CD8-positive, alpha-beta T cell (primary cell): ENCODE measurements at regions of chr7 and their contacts with region 1.

Region 1: GRCh38 chr7:13279854-13280435 is 592.5 kb downstream of the ARL4A start:
- DNase-seq: peak in 2 of 9 experiments; percentile 23 to 37
- ATAC-seq: no peak
- H3K4me3 ChIP-seq: no peak overlapping the region
- H3K4me3 Mint-ChIP-seq: no peak overlapping the region
- H3K27ac ChIP-seq: no peak overlapping the region
- H3K27ac Mint-ChIP-seq: no peak overlapping the region
- H3K4me1 ChIP-seq: no peaks in the 10 kb centered on the region
- H3K4me1 Mint-ChIP-seq: no peaks in the 10 kb centered on the region
- H3K27me3 ChIP-seq: no peaks in the 10 kb centered on the region
- H3K27me3 Mint-ChIP-seq: peaks cover 8% of the 10 kb centered on the region
- CTCF ChIP-seq: peak; percentile 56

Region 2: DNA sequence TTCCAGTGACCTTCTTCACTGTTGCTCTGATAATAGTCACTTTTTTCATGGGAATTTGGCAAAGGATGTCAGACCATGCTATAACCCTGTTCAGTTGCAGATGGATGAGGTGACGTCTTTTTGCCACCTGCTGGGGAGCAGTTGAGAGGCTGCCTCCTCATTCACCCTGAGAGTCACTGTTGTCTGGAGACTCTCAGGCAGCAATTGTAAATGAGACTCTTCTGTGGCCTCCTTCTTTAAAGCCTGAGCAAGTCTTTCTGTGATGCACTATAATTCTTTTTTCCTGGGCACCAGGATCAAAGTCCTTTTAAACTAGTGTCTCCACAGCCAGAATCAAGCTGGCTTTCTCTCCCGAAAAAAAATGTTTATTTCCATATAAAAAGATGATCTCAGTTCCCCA is 247.4 kb before region 1 on chr7:
- CTCF ChIA-PET with region 1: no interaction called
- POLR2A ChIA-PET with region 1: no interaction called
- intact Hi-C with region 1: no loop called
- DNase-seq: no peak
- ATAC-seq: no peak
- H3K4me3 ChIP-seq: no peak overlapping the region
- H3K4me3 Mint-ChIP-seq: no peak overlapping the region
- H3K27ac ChIP-seq: no peak overlapping the region
- H3K27ac Mint-ChIP-seq: no peak overlapping the region
- H3K4me1 ChIP-seq: no peaks in the 10 kb centered on the region
- H3K4me1 Mint-ChIP-seq: no peaks in the 10 kb centered on the region
- H3K27me3 ChIP-seq: no peaks in the 10 kb centered on the region
- H3K27me3 Mint-ChIP-seq: peaks cover 2% of the 10 kb centered on the region
- CTCF ChIP-seq: no peak

Region 3: GRCh38 chr7:13518738-13519137 is 238.8 kb after region 1 on chr7:
- CTCF ChIA-PET with region 1: no interaction called
- POLR2A ChIA-PET with region 1: no interaction called
- intact Hi-C with region 1: no loop called
- DNase-seq: no peak
- ATAC-seq: no peak
- H3K4me3 ChIP-seq: no peak overlapping the region
- H3K4me3 Mint-ChIP-seq: no peak overlapping the region
- H3K27ac ChIP-seq: no peak overlapping the region
- H3K27ac Mint-ChIP-seq: no peak overlapping the region
- H3K4me1 ChIP-seq: no peaks in the 10 kb centered on the region
- H3K4me1 Mint-ChIP-seq: no peaks in the 10 kb centered on the region
- H3K27me3 ChIP-seq: no peaks in the 10 kb centered on the region
- H3K27me3 Mint-ChIP-seq: no peaks in the 10 kb centered on the region
- CTCF ChIP-seq: no peak

Region 4: GRCh38 chr7:13742811-13743210 is 462.9 kb after region 1 on chr7:
- CTCF ChIA-PET with region 1: no interaction called
- POLR2A ChIA-PET with region 1: no interaction called
- intact Hi-C with region 1: loop called in 1 of 2 experiments (anchors 5 kb)
- DNase-seq: peak in 2 of 9 experiments; percentile 20 to 24
- ATAC-seq: no peak
- H3K4me3 ChIP-seq: no peak overlapping the region
- H3K4me3 Mint-ChIP-seq: no peak overlapping the region
- H3K27ac ChIP-seq: no peak overlapping the region
- H3K27ac Mint-ChIP-seq: no peak overlapping the region
- H3K4me1 ChIP-seq: no peaks in the 10 kb centered on the region
- H3K4me1 Mint-ChIP-seq: no peaks in the 10 kb centered on the region
- H3K27me3 ChIP-seq: no peaks in the 10 kb centered on the region
- H3K27me3 Mint-ChIP-seq: no peaks in the 10 kb centered on the region
- CTCF ChIP-seq: no peak

Region 5: GRCh38 chr7:14691597-14692203 is 1411.8 kb after region 1 on chr7:
- CTCF ChIA-PET with region 1: interaction called, 14 read pairs
- POLR2A ChIA-PET with region 1: no interaction called
- intact Hi-C with region 1: loop called (anchors 1 kb)
- DNase-seq: peak; percentile 1 to 65 (median 47)
- ATAC-seq: no peak
- H3K4me3 ChIP-seq: no peak overlapping the region
- H3K4me3 Mint-ChIP-seq: no peak overlapping the region
- H3K27ac ChIP-seq: no peak overlapping the region
- H3K27ac Mint-ChIP-seq: no peak overlapping the region
- H3K4me1 ChIP-seq: no peaks in the 10 kb centered on the region
- H3K4me1 Mint-ChIP-seq: no peaks in the 10 kb centered on the region
- H3K27me3 ChIP-seq: no peaks in the 10 kb centered on the region
- H3K27me3 Mint-ChIP-seq: no peaks in the 10 kb centered on the region
- CTCF ChIP-seq: peak; percentile 84

Region 6: GRCh38 chr7:15015545-15016326 is 1735.8 kb after region 1 on chr7:
- CTCF ChIA-PET with region 1: no interaction called
- POLR2A ChIA-PET with region 1: no interaction called
- intact Hi-C with region 1: loop called in 1 of 2 experiments (anchors 10 kb)
- DNase-seq: peak in 2 of 9 experiments; percentile 21 to 22
- ATAC-seq: peak; percentile 42
- H3K4me3 ChIP-seq: no peak overlapping the region
- H3K4me3 Mint-ChIP-seq: no peak overlapping the region
- H3K27ac ChIP-seq: no peak overlapping the region
- H3K27ac Mint-ChIP-seq: no peak overlapping the region
- H3K4me1 ChIP-seq: no peaks in the 10 kb centered on the region
- H3K4me1 Mint-ChIP-seq: no peaks in the 10 kb centered on the region
- H3K27me3 ChIP-seq: no peaks in the 10 kb centered on the region
- H3K27me3 Mint-ChIP-seq: no peaks in the 10 kb centered on the region
- CTCF ChIP-seq: no peak